ENCODE measurements at regions of chrX and their contacts with region 1.

Region 1: GRCh38 chrX:49079489-49080428 is at the start of gene WDR45:
- DNase-seq: peak; percentile 52 to 84 (median 73)
- H3K4me3 ChIP-seq: peak within 1 kb of the TSS; percentile 43 to 80 (median 70)
- H3K27ac ChIP-seq: peak within 1 kb of the TSS; percentile 63 to 96 (median 91)
- H3K27me3 ChIP-seq: peaks cover 0 to 42% (median 0%) of the 10 kb centered on the region in 45 donors
- CTCF ChIP-seq: no peak
- total RNA-seq, gene WDR45: 52.9 to 142 (median 77.9) TPM

Region 2: DNA sequence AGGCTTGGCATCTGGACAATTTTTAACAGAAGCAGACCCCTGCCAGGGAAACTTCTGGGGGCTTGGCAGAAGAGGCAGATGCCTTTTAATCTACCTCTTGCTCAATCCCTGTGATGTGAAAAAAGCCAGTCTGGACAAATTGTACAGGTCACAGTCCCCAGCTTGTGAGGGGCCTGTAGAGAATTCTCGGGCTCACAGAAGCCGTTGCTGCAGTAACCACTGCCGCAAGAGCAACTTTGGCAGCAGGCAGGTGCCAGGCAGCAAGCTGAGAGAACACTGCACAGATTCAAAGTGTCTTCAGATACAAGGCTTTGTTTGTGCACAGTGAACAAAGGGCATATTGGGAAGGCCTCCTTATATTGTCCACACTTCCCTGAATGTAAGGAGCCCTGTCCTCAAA is 32.0 kb after region 1 on chrX:
- intact Hi-C with region 1: loop called in 1 of 2 experiments (anchors 5 kb)
- DNase-seq: peak in 8 of 10 donors; percentile 48 to 70 (median 66)
- H3K4me3 ChIP-seq: peak overlapping the region in 2 of 59 donors; percentile 14 to 18
- H3K27ac ChIP-seq: peak overlapping the region; percentile 24 to 95 (median 88)
- H3K27me3 ChIP-seq: peaks cover 0 to 58% (median 0%) of the 10 kb centered on the region in 45 donors
- CTCF ChIP-seq: no peak